IMR-90 (cell line): ENCODE measurements at regions of chr11 and their contacts with region 1.

Region 1: DNA sequence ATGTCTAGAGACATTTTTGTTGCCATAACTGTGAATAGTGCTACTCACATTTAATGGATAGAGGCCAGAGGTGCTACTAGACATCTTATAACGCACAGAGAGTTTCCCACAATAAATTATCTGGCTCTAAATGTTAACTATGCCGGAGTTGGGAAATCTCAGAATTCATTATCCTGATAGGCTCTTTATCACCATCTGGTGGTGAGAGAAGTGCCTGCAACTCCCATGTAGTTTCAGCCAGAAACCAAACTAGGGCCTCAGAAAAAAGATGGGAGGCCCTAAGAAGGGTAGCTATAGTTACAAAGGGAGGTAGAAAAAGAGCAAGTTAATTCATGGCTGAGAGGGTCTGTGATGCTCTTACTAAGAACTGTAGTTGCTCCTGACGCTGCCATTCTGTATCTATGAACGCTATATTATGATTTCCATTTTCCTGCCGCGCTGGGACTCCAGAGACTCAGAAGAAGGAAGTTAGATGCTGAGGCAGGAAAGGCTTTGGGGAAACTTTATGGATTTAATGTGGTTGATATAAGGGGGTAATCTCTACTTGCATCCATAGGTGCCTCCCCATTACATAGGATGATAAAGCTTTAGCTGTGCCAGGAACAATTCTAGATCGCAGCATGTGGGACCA is 22.9 kb upstream of the MRPL17 start:
- DNase-seq: peak; percentile 63
- ATAC-seq: peak; percentile 93
- H3K4me3 ChIP-seq: no peak overlapping the region
- H3K27ac ChIP-seq: no peak overlapping the region
- H3K4me1 ChIP-seq: no peaks in the 10 kb centered on the region
- H3K27me3 ChIP-seq: 0 out of 2 replicates have a peak, but pooled peaks cover 2% of the 10 kb centered on the region
- CTCF ChIP-seq: peak; percentile 89
- POLR2A ChIP-seq: no peak
- RAD21 ChIP-seq: peak; percentile 79

Region 2: GRCh38 chr11:6443269-6444003 is 262.6 kb before region 1 on chr11:
- CTCF ChIA-PET with region 1: no interaction called
- POLR2A ChIA-PET with region 1: no interaction called
- dilution Hi-C with region 1: no loop called
- in situ Hi-C with region 1: no loop called
- intact Hi-C with region 1: loop called (anchors 1 kb)
- DNase-seq: peak; percentile 50
- ATAC-seq: peak; percentile 98
- H3K4me3 ChIP-seq: no peak overlapping the region
- H3K27ac ChIP-seq: no peak overlapping the region
- H3K4me1 ChIP-seq: no peaks in the 10 kb centered on the region
- H3K27me3 ChIP-seq: no peaks in the 10 kb centered on the region
- CTCF ChIP-seq: peak; percentile 79
- POLR2A ChIP-seq: no peak
- RAD21 ChIP-seq: peak; percentile 80

Region 3: DNA sequence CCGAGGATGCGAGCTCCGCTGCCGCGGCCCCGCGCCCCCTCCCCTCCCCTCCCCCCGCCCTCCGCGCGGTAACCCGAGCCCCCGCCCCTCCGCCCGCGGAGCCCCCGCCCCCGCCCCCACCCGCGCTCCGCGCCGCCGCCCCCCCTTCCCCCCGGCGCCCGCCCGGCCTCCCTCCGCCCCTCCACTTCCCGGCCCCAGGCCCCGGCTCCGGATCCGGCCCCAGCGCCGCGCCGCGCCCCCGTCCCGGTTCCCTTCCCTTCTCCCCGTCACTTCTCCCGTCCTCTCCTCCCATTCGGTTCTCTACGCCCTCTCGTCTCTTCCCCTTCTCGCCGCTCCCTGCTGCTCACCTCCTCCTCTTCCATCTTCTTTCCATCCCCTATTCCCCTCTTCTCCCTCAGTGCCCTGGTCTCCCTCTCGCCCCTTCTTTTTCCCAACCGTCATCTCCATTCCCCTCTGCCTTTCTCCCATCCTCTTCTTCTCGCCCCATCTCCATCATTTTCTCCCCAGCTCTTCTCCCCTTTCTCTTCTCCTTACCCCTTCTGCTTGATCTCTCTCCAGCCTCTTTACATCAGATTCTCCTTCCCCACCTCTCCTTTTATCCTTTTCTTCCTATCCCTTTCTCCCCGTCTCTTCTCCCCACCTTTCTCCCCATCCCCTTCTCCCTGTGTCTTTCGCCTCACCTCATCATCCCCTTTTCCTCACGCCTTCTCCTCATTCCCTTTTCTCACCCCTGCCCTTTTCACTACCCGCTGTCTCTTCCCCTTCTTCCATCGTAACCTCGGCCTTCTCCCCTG is 50.0 kb before region 1 on chr11 and contains the start of gene DCHS1:
- CTCF ChIA-PET with region 1: no interaction called
- POLR2A ChIA-PET with region 1: no interaction called
- dilution Hi-C with region 1: no loop called
- in situ Hi-C with region 1: no loop called
- intact Hi-C with region 1: no loop called
- DNase-seq: no peak
- ATAC-seq: peak; percentile 59
- H3K4me3 ChIP-seq: peak within 1 kb of the TSS; percentile 98
- H3K27ac ChIP-seq: peak within 1 kb of the TSS; percentile 64
- H3K4me1 ChIP-seq: peaks cover 5% of the 10 kb centered on the region
- H3K27me3 ChIP-seq: peaks cover 16% of the 10 kb centered on the region
- CTCF ChIP-seq: no peak
- POLR2A ChIP-seq: no peak
- RAD21 ChIP-seq: no peak
- total RNA-seq, gene DCHS1: 1.4 and 1.7 TPM in 2 replicates

Region 4: DNA sequence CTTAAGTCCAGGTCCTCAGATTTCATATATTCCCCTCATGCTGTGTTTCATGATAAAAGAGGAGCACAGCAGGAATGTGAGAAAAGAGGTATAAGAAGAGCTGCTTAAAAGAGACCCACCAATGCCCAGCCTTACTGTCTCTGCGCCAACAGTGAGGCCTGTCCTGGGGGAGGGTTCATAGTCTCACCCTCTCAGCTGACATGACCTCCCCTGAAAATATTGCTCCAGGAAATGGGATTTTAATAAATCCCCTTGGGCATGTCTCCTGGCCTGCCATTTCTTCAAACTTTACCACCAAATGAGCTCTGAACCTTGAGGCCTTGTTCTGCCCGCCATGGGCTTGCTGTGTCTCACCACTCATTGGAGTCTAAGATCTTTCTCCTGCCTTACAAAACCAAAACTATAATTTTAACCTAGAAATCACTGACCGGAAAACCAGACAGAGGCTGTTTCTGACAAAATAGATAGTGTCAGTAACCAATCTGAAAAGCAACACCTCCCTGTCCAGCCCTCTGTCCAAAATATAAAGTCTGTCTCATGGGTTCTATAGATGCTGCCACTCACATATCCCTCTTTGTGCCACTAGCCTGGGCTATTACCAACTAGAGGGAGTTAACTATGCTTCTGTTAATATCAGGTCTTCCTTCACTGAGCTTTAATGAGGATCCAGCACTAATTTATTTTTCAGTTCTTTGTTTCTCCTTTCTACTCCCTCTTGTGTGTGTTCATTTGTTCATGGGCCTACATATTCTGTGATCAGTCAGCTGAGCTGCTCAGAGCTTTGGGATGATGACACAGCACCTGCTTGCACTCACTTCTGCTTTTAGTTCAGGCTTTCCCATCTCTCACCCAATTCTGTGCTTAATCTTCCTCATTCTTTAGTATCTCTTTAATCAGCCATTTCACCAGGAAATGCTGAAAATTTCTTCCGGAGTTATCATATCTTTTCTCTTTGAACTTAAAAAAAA is 66.2 kb after region 1 on chr11 and contains the start of gene OR2AG2:
- CTCF ChIA-PET with region 1: no interaction called
- POLR2A ChIA-PET with region 1: no interaction called
- dilution Hi-C with region 1: no loop called
- in situ Hi-C with region 1: no loop called
- intact Hi-C with region 1: no loop called
- DNase-seq: no peak
- ATAC-seq: no peak
- H3K4me3 ChIP-seq: no peak within 1 kb of the TSS
- H3K27ac ChIP-seq: no peak within 1 kb of the TSS
- H3K4me1 ChIP-seq: no peaks in the 10 kb centered on the region
- H3K27me3 ChIP-seq: no peaks in the 10 kb centered on the region
- CTCF ChIP-seq: no peak
- POLR2A ChIP-seq: no peak
- RAD21 ChIP-seq: no peak
- total RNA-seq, gene OR2AG2: 0.28 and 0.54 TPM in 2 replicates

Region 5: GRCh38 chr11:6817694-6818093 is 111.7 kb after region 1 on chr11:
- CTCF ChIA-PET with region 1: no interaction called
- POLR2A ChIA-PET with region 1: no interaction called
- dilution Hi-C with region 1: no loop called
- in situ Hi-C with region 1: no loop called
- intact Hi-C with region 1: no loop called
- DNase-seq: peak; percentile 2
- ATAC-seq: peak; percentile 48; the same call in 1 of the 2 replicates
- H3K4me3 ChIP-seq: no peak overlapping the region
- H3K27ac ChIP-seq: no peak overlapping the region
- H3K4me1 ChIP-seq: no peaks in the 10 kb centered on the region
- H3K27me3 ChIP-seq: no peaks in the 10 kb centered on the region; the same call in 1 of the 2 replicates
- CTCF ChIP-seq: no peak
- POLR2A ChIP-seq: no peak
- RAD21 ChIP-seq: no peak